Adrenal gland (tissue), 19 donors: ENCODE measurements at regions of chr16 and their contacts with region 1.

Region 1: DNA sequence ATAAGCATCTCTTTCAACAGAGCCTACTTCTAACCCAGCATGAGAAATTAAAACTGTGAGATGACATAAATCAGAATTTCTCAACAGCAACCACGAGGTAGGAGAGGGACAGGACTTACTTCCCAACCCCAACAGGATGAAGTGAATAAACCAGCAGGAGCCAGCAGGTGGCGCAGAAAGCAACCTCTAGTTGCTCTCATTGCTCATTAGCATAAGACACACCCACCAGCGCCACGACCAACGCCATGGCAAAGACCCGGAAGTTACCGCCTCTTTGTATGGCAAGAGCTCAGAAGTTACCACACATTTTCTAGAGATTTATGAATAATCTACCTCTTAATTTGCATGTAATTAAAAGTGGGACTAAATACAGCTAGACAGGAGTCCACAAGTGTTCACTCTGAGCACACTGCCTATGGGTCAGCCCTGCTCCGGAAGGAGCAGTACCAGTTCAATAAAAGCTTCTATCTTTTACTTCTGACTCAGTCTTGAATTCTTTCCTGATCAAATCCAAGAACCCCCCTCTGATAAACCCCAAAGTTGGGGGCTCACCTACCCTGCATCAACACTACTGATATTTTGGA is 189.6 kb upstream of the CDH8 start:
- DNase-seq: peak; percentile 76 to 92 (median 89)
- H3K4me3 ChIP-seq: peak overlapping the region in 1 of 4 donors; percentile 32
- H3K27ac ChIP-seq: no peak overlapping the region
- H3K4me1 ChIP-seq: no peaks in the 10 kb centered on the region
- H3K27me3 ChIP-seq: no peaks in the 10 kb centered on the region
- CTCF ChIP-seq: peak; percentile 38 to 70 (median 62)
- POLR2A ChIP-seq: no peak

Region 2: GRCh38 chr16:62445909-62446308 is 220.1 kb after region 1 on chr16:
- intact Hi-C with region 1: no loop called
- DNase-seq: no peak
- H3K4me3 ChIP-seq: no peak overlapping the region
- H3K27ac ChIP-seq: no peak overlapping the region
- H3K4me1 ChIP-seq: no peaks in the 10 kb centered on the region
- H3K27me3 ChIP-seq: no peaks in the 10 kb centered on the region
- CTCF ChIP-seq: no peak
- POLR2A ChIP-seq: no peak

Region 3: DNA sequence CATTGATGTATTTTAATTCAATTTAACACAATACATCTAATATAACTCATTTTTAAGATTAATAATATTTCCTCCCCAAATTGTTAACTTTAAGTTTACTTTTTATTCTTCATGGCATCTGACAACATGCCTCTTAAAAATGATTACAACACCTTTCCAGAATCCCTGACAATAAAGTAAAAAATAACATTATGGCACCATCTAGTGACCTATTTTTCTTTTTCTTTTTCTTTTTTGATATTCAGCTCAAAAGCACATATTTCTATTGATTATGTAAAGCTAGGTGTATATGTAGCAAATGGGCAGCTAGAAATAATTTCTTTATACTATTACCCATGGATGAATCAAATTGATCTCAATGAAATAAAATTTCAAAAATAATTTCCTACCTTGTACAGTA is 644.8 kb after region 1 on chr16:
- intact Hi-C with region 1: loop called in 1 of 2 experiments (anchors 10 kb)
- DNase-seq: no peak
- H3K4me3 ChIP-seq: no peak overlapping the region
- H3K27ac ChIP-seq: no peak overlapping the region
- H3K4me1 ChIP-seq: no peaks in the 10 kb centered on the region
- H3K27me3 ChIP-seq: no peaks in the 10 kb centered on the region
- CTCF ChIP-seq: peak in 5 of 6 experiments; percentile 6 to 49 (median 30)
- POLR2A ChIP-seq: no peak